T-cell (primary cell): ENCODE measurements at regions of chr19 and their contacts with region 1.

Region 1: DNA sequence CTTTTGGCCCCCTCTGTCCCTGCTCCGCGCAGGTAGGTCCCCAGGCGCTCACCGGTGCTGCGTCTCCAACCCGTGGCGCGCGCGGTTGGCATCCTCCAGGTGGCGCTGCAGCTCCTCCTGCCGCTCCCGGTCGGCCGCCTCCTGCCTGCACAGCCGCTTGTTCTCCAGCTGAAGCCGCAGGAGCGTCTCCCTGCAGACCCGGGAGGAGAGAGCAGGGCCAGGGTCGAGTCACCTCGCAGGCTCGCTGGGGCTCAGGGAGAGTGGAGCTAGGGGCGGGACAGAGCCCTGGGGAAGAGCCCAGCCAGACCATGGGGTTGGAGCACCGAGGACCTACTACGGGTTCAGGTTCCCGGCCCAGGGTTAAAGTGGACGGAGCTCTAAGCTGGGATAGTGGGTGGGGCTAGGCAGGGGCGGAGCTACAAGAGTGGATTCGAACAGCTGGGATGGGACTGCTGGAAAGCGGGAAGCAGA is 9.3 kb downstream of the HOOK2 start:
- DNase-seq: peak in 32 of 35 experiments; percentile 48 to 89 (median 76)
- ATAC-seq: peak; percentile 61 to 80 (median 74)
- H3K4me3 ChIP-seq: no peak overlapping the region
- H3K4me3 Mint-ChIP-seq: no peak overlapping the region
- H3K27ac ChIP-seq: no peak overlapping the region
- H3K27ac Mint-ChIP-seq: no peak overlapping the region
- H3K4me1 ChIP-seq: peaks cover 0 to 20% of the 10 kb centered on the region in 2 experiments
- H3K4me1 Mint-ChIP-seq: peaks cover 3 to 6% (median 5%) of the 10 kb centered on the region in 3 donors
- H3K27me3 ChIP-seq: peaks cover 0 to 8% of the 10 kb centered on the region in 2 experiments
- H3K27me3 Mint-ChIP-seq: no peaks in the 10 kb centered on the region

Region 2: DNA sequence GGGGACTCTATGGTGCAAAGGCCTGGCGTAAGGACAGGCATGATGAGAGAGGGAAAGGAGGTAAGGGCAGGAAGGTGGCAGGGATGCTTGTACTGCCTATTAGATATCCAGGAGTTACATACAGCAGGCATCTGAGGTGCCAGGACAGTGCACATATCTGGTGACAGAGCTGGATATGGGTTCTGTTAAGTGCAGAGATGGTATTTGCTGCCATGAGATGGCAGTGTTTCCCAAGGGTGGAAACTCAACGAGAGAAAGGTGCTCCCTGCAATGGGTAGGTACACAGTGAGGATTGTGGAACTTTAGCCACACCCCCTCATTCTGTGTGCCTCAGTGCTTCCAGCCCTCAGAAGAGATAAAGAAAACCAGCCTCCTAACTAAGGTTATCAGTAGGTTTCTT is 49.2 kb before region 1 on chr19:
- CTCF ChIA-PET with region 1: no interaction called
- POLR2A ChIA-PET with region 1: no interaction called
- DNase-seq: peak in 25 of 35 experiments; percentile 6 to 73 (median 35)
- ATAC-seq: peak; percentile 49 to 82 (median 58)
- H3K4me3 ChIP-seq: no peak overlapping the region
- H3K4me3 Mint-ChIP-seq: no peak overlapping the region
- H3K27ac ChIP-seq: no peak overlapping the region
- H3K27ac Mint-ChIP-seq: no peak overlapping the region
- H3K4me1 ChIP-seq: peaks cover 2 to 18% of the 10 kb centered on the region in 2 experiments
- H3K4me1 Mint-ChIP-seq: peaks cover 13 to 21% (median 14%) of the 10 kb centered on the region in 3 donors
- H3K27me3 ChIP-seq: no peaks in the 10 kb centered on the region
- H3K27me3 Mint-ChIP-seq: no peaks in the 10 kb centered on the region

Region 3: DNA sequence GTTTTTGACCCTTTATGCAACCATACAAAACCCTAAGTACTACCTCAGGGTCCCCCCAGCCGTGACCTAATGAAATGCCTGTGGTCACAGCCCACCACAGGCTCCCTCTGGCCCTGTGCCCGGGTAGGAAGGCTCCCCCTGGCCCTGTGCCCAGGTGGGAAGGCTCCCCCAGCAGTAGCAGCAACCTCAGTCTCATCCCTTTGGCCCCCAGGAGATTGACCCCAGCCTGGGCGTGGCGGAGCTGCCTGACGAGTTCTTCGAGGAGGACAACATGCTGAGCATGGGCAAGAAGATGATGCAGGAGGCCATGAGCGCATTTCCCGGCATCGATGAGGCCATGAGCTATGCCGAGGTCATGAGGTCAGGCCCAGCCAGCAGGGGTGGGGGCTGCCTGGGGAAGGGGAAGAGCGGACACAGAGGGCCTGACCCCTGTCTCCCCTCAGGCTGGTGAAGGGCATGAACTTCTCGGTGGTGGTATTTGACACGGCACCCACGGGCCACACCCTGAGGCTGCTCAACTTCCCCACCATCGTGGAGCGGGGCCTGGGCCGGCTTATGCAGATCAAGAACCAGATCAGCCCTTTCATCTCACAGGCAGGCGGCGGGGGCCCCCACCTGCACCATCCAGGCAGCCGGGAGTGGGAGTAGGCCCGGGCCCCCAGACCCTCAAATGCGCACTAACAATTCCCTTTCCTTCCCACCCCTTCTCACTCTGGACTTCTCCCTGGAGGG is 20.8 kb before region 1 on chr19:
- CTCF ChIA-PET with region 1: no interaction called
- POLR2A ChIA-PET with region 1: no interaction called
- DNase-seq: no peak
- ATAC-seq: no peak
- H3K4me3 ChIP-seq: no peak overlapping the region
- H3K4me3 Mint-ChIP-seq: no peak overlapping the region
- H3K27ac ChIP-seq: no peak overlapping the region
- H3K27ac Mint-ChIP-seq: no peak overlapping the region
- H3K4me1 ChIP-seq: peaks cover 0 to 9% of the 10 kb centered on the region in 2 experiments
- H3K4me1 Mint-ChIP-seq: peaks cover 4 to 7% (median 5%) of the 10 kb centered on the region in 3 donors
- H3K27me3 ChIP-seq: peaks cover 0 to 9% of the 10 kb centered on the region in 2 experiments
- H3K27me3 Mint-ChIP-seq: peaks cover 4 to 5% of the 10 kb centered on the region in 2 donors

Region 4: GRCh38 chr19:12784942-12785430 is 18.9 kb after region 1 on chr19:
- CTCF ChIA-PET with region 1: no interaction called
- POLR2A ChIA-PET with region 1: no interaction called
- DNase-seq: peak in 10 of 35 experiments; percentile 17 to 79 (median 51)
- ATAC-seq: no peak
- H3K4me3 ChIP-seq: no peak overlapping the region
- H3K4me3 Mint-ChIP-seq: no peak overlapping the region
- H3K27ac ChIP-seq: peak overlapping the region; percentile 100
- H3K27ac Mint-ChIP-seq: no peak overlapping the region
- H3K4me1 ChIP-seq: peaks cover 38 to 72% of the 10 kb centered on the region in 2 experiments
- H3K4me1 Mint-ChIP-seq: peaks cover 19 to 35% (median 24%) of the 10 kb centered on the region in 3 donors
- H3K27me3 ChIP-seq: no peaks in the 10 kb centered on the region
- H3K27me3 Mint-ChIP-seq: no peaks in the 10 kb centered on the region

Region 5: GRCh38 chr19:12890787-12891552 is 124.9 kb after region 1 on chr19 and contains the start of gene GCDH:
- CTCF ChIA-PET with region 1: interaction called, 3 to 10 read pairs
- POLR2A ChIA-PET with region 1: no interaction called
- DNase-seq: peak; percentile 86 to 98 (median 96)
- ATAC-seq: peak; percentile 89 to 97 (median 96)
- H3K4me3 ChIP-seq: peak within 1 kb of the TSS; percentile 74 to 82
- H3K4me3 Mint-ChIP-seq: peak within 1 kb of the TSS; percentile 95 to 99 (median 97)
- H3K27ac ChIP-seq: peak within 1 kb of the TSS; percentile 63
- H3K27ac Mint-ChIP-seq: peak within 1 kb of the TSS; percentile 92 to 94
- H3K4me1 ChIP-seq: peaks cover 10 to 23% of the 10 kb centered on the region in 2 experiments
- H3K4me1 Mint-ChIP-seq: peaks cover 27 to 33% (median 27%) of the 10 kb centered on the region in 3 donors
- H3K27me3 ChIP-seq: no peaks in the 10 kb centered on the region
- H3K27me3 Mint-ChIP-seq: no peaks in the 10 kb centered on the region
- total RNA-seq, gene GCDH: 39.8 to 68.7 (median 60.0) TPM